CD4-positive, alpha-beta memory T cell (primary cell): ENCODE measurements at regions of chr1 and their contacts with region 1.

Region 1: GRCh38 chr1:151327223-151327902 is at the start of gene PI4KB:
- DNase-seq: peak; percentile 95 to 97 (median 97)
- H3K4me3 ChIP-seq: peak within 1 kb of the TSS; percentile 74 to 79
- H3K4me3 Mint-ChIP-seq: peak within 1 kb of the TSS; percentile 92 to 98 (median 97)
- H3K27ac ChIP-seq: peak within 1 kb of the TSS; percentile 84
- H3K27ac Mint-ChIP-seq: peak within 1 kb of the TSS; percentile 90 to 99 (median 99)
- H3K4me1 ChIP-seq: peaks cover 35% of the 10 kb centered on the region
- H3K4me1 Mint-ChIP-seq: peaks cover 31 to 57% (median 40%) of the 10 kb centered on the region in 4 donors
- H3K27me3 ChIP-seq: no peaks in the 10 kb centered on the region
- H3K27me3 Mint-ChIP-seq: no peaks in the 10 kb centered on the region
- total RNA-seq, gene PI4KB: 87.2 to 97.4 TPM

Region 2: DNA sequence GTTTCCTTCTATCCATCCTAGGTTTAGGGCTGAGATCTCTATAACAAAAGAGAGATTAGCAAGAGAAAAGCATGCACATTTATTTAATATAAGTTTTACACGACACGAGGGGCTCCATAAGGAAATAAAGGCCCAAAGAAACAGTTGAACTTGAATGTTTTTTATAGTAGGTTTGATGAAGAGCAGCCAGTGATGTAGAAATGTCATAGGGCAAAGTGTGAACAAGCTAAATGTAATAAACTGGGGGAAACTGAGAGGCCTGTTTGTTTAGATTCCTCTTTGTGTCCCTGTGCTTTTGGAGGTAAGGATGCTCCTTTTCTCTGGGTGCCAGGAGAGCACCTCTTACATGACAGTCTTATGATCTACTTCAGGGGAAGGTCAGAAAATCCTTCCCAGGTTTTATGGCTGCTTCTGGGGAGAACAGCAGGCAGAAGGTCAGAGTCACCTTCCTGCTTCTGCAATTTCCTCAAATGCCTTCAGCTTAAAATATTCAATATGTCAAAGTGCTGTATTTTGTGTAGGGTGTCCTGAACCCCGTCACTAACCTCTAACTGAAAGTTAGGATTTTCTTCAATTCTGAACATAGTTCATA is 597.1 kb before region 1 on chr1:
- CTCF ChIA-PET with region 1: no interaction called
- POLR2A ChIA-PET with region 1: no interaction called
- intact Hi-C with region 1: no loop called
- DNase-seq: no peak
- H3K4me3 ChIP-seq: no peak overlapping the region
- H3K4me3 Mint-ChIP-seq: no peak overlapping the region
- H3K27ac ChIP-seq: no peak overlapping the region
- H3K27ac Mint-ChIP-seq: peak overlapping the region in 2 of 7 donors; percentile 18 to 46
- H3K4me1 ChIP-seq: no peaks in the 10 kb centered on the region
- H3K4me1 Mint-ChIP-seq: no peaks in the 10 kb centered on the region
- H3K27me3 ChIP-seq: no peaks in the 10 kb centered on the region
- H3K27me3 Mint-ChIP-seq: no peaks in the 10 kb centered on the region

Region 3: DNA sequence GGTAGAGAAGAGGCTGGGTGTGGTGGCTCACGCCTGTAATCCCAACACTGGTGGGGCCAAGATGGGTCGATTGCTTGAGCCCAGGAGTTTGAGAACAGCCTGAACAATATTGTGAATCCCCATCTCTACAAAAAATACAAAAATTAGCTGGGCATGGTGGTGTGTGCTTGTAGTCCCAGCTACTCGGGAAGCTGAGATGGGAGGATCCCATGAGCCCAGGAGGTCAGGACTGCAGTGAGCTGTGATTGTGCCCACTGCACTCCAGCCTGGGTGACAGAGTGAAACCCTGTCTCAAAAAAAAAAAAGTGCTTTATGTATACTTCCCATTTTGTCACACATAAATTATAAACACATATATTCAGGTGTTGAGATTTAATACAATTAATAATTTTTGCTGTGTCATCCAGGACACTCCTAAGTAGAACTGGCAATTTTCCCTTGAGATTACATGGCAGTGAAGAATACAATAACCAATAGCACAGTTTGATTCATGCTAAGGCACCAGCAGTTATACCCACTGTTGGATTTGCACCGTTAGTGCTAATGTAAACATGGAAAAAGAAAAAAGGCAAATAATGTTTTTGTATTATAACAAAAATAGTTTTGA is 241.3 kb before region 1 on chr1:
- CTCF ChIA-PET with region 1: no interaction called
- POLR2A ChIA-PET with region 1: no interaction called
- intact Hi-C with region 1: no loop called
- DNase-seq: no peak
- H3K4me3 ChIP-seq: no peak overlapping the region
- H3K4me3 Mint-ChIP-seq: no peak overlapping the region
- H3K27ac ChIP-seq: no peak overlapping the region
- H3K27ac Mint-ChIP-seq: peak overlapping the region in 2 of 7 donors; percentile 16 to 65
- H3K4me1 ChIP-seq: no peaks in the 10 kb centered on the region
- H3K4me1 Mint-ChIP-seq: no peaks in the 10 kb centered on the region
- H3K27me3 ChIP-seq: no peaks in the 10 kb centered on the region
- H3K27me3 Mint-ChIP-seq: no peaks in the 10 kb centered on the region

Region 4: GRCh38 chr1:151189638-151190445 is 137.5 kb before region 1 on chr1 and contains the start of gene VPS72:
- CTCF ChIA-PET with region 1: no interaction called
- POLR2A ChIA-PET with region 1: interaction called, 10 read pairs
- intact Hi-C with region 1: no loop called
- DNase-seq: peak; percentile 81 to 92 (median 84)
- H3K4me3 ChIP-seq: peak within 1 kb of the TSS; percentile 67 to 78
- H3K4me3 Mint-ChIP-seq: peak within 1 kb of the TSS; percentile 92 to 100 (median 98)
- H3K27ac ChIP-seq: peak within 1 kb of the TSS; percentile 89
- H3K27ac Mint-ChIP-seq: peak within 1 kb of the TSS; percentile 91 to 100 (median 98)
- H3K4me1 ChIP-seq: peaks cover 25% of the 10 kb centered on the region
- H3K4me1 Mint-ChIP-seq: peaks cover 22 to 43% (median 33%) of the 10 kb centered on the region in 4 donors
- H3K27me3 ChIP-seq: no peaks in the 10 kb centered on the region
- H3K27me3 Mint-ChIP-seq: no peaks in the 10 kb centered on the region
- total RNA-seq, gene VPS72: 68.1 to 68.4 TPM

Region 5: DNA sequence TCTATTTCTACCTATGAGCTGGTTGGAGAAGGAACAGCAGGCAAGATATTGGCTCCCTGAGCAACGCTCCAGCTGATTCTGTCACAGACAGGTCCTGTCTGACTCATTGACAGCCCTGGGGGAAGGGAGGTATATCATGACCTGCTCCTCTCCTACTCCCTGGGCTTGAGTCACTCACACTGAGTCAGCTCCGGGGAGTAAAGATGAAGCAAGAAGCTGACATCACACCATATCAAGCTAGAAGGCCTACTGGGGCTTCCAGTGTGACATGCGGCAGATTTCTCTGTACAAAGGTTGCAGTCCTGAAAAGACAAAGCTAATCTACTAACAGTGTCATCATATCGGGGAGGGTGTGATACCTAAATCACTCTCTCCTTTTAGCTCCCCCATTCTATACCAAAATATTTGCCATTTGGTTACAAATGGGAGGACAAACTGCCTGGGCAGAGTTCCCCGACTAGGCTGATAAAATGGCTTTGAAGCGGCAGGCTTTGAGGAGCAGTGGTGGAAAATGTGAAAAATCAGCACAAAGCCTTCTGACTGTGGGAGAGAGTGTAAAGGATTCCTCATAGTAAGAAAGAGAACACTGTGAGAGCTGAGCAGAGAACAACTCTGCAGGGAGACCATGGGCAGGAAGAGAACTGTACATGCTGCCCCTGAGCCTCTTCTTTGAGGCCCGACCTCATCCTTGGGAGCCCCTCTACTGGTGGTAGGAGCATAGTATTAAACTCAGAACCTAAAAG is 15.6 kb before region 1 on chr1:
- CTCF ChIA-PET with region 1: interaction called, 3 read pairs
- POLR2A ChIA-PET with region 1: interaction called, 15 read pairs
- intact Hi-C with region 1: no loop called
- DNase-seq: peak in 3 of 5 donors; percentile 17 to 90 (median 22)
- H3K4me3 ChIP-seq: no peak overlapping the region
- H3K4me3 Mint-ChIP-seq: peak overlapping the region in 5 of 8 donors; percentile 5 to 37 (median 14)
- H3K27ac ChIP-seq: no peak overlapping the region
- H3K27ac Mint-ChIP-seq: peak overlapping the region; percentile 29 to 84 (median 78)
- H3K4me1 ChIP-seq: peaks cover 37% of the 10 kb centered on the region
- H3K4me1 Mint-ChIP-seq: peaks cover 25 to 53% (median 35%) of the 10 kb centered on the region in 4 donors
- H3K27me3 ChIP-seq: no peaks in the 10 kb centered on the region
- H3K27me3 Mint-ChIP-seq: no peaks in the 10 kb centered on the region

Region 6: GRCh38 chr1:151346769-151347522 is 19.6 kb after region 1 on chr1 and contains the start of gene RFX5:
- CTCF ChIA-PET with region 1: interaction called, 3 read pairs
- POLR2A ChIA-PET with region 1: interaction called, 23 read pairs
- intact Hi-C with region 1: loop called (anchors 1 kb)
- DNase-seq: peak; percentile 93 to 98 (median 97)
- H3K4me3 ChIP-seq: peak within 1 kb of the TSS; percentile 59 to 71
- H3K4me3 Mint-ChIP-seq: peak within 1 kb of the TSS; percentile 90 to 98 (median 94)
- H3K27ac ChIP-seq: peak within 1 kb of the TSS; percentile 97
- H3K27ac Mint-ChIP-seq: peak within 1 kb of the TSS; percentile 96 to 100 (median 98)
- H3K4me1 ChIP-seq: peaks cover 28% of the 10 kb centered on the region
- H3K4me1 Mint-ChIP-seq: peaks cover 22 to 41% (median 31%) of the 10 kb centered on the region in 4 donors
- H3K27me3 ChIP-seq: no peaks in the 10 kb centered on the region
- H3K27me3 Mint-ChIP-seq: no peaks in the 10 kb centered on the region
- total RNA-seq, gene RFX5: 56.3 to 64.3 TPM

Region 7: DNA sequence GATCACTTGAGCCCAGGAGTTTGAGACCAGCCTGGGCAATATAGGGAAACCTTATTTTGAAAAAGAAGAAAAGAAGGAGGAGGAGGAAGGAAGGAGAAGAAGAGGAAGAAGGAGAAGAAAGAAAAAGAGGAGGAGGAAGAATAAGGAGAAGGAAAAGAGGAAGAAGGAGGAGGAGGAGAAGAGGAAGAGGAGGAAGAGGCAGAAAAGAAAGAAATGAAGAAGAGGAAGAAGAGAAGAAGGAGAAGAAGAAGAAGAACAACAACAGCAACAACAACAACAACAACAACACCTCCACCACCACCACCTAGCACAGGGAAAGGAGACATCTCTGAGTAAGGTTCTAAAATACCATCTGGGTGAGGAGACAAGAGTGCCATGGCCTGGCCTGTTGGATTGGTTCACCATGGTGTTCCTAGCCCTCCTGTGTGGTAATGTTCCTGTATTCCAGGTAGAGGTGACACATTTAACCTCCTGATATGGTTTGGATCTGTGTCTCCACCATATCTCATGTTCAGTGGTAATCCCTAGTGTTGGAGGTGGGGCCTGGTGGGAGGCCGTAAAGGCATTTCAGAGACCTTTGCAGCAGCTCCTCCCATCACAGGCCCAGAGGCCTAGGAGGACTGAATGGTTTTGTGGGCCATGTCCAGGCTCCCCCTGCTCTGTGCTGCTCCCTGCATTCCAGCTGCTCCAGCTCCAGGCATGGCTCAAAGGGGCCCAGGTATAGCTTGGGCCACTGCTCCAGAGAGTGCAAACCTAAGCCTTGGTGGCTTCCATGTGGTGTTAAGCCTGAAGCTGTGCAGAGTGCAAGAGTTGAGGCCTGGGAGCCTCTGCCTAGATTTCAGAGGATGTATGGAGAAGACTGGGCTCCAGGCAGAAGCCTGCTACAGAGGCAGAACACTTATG is 34.8 kb after region 1 on chr1:
- CTCF ChIA-PET with region 1: no interaction called
- POLR2A ChIA-PET with region 1: no interaction called
- intact Hi-C with region 1: no loop called
- DNase-seq: no peak
- H3K4me3 ChIP-seq: no peak overlapping the region
- H3K4me3 Mint-ChIP-seq: no peak overlapping the region
- H3K27ac ChIP-seq: no peak overlapping the region
- H3K27ac Mint-ChIP-seq: no peak overlapping the region
- H3K4me1 ChIP-seq: no peaks in the 10 kb centered on the region
- H3K4me1 Mint-ChIP-seq: no peaks in the 10 kb centered on the region
- H3K27me3 ChIP-seq: no peaks in the 10 kb centered on the region
- H3K27me3 Mint-ChIP-seq: no peaks in the 10 kb centered on the region

Region 8: DNA sequence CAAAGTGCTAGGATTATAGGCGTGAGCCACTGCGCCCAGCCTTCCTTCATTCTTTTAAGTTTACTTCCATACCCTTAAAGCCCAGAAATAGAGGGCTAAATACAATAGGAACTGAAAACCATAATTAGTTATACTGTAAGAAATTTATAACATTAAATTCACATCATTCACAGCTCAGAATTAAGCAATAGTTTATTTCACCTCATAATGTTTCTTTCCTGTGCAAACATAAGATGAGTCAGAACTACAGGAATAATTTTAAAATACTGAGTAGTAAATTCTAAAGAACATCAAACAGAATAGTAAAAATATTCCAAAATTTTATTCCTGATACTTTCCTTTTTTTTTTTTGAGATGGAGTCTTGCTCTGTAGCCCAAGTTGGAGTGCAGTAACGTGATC is 107.8 kb after region 1 on chr1:
- CTCF ChIA-PET with region 1: no interaction called
- POLR2A ChIA-PET with region 1: no interaction called
- intact Hi-C with region 1: no loop called
- DNase-seq: no peak
- H3K4me3 ChIP-seq: no peak overlapping the region
- H3K4me3 Mint-ChIP-seq: no peak overlapping the region
- H3K27ac ChIP-seq: no peak overlapping the region
- H3K27ac Mint-ChIP-seq: peak overlapping the region in 2 of 7 donors; percentile 23 to 60
- H3K4me1 ChIP-seq: peaks cover 24% of the 10 kb centered on the region
- H3K4me1 Mint-ChIP-seq: peaks cover 20 to 43% (median 27%) of the 10 kb centered on the region in 4 donors
- H3K27me3 ChIP-seq: no peaks in the 10 kb centered on the region
- H3K27me3 Mint-ChIP-seq: no peaks in the 10 kb centered on the region

Region 9: DNA sequence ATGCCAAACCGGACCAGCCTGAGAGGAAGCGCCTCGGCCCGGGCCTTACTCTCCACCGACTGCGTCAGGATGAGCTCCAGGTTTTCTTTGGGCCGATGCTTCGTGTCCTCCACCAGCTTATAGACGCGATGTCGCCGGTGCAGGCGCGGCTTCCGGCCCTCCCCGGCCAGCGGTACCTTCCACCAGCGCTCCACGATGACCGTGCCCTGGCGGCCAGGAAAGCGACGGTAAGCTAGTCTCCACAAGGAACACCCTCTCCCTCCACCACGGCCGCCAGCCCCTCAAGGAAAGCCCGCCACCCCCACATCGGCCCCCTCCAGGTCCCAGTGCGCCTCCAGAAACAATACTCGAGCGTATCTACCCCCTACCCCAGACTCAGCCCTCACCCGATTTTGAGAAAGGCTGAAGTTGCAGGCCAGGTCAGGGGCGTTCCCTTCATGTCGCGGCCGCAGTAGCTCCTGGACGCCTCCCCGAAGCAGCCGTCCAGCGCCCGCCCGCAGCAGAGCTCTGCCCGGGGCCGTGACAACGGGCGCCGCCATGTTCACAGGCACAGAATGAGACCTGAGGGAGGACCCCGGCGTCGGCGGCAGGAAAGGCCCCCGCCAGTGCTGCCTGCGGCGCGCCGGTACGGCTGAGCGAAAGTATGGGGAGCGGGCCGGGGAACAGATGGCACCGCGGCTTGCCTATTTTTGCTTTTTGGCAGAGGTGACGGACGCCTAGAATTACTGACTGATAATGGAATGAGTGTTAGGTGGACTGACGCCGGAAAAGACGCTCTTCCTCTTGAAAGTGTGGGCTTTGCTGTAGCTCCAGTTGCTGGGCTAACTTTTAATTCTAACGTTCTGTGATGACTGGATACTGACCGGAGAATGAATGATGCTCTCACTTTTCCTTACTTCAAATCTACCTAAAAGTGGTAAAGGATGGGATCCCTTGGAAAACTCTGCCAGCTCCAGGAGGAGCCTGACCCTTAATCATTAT is 435.9 kb after region 1 on chr1 and contains the start of gene MRPL9:
- CTCF ChIA-PET with region 1: no interaction called
- POLR2A ChIA-PET with region 1: interaction called, 3 read pairs
- intact Hi-C with region 1: loop called (anchors 1 kb)
- DNase-seq: peak; percentile 82 to 85 (median 83)
- H3K4me3 ChIP-seq: peak within 1 kb of the TSS; percentile 34 to 66
- H3K4me3 Mint-ChIP-seq: peak within 1 kb of the TSS; percentile 86 to 97 (median 92)
- H3K27ac ChIP-seq: peak within 1 kb of the TSS; percentile 72
- H3K27ac Mint-ChIP-seq: peak within 1 kb of the TSS; percentile 90 to 99 (median 96)
- H3K4me1 ChIP-seq: peaks cover 16% of the 10 kb centered on the region
- H3K4me1 Mint-ChIP-seq: peaks cover 12 to 30% (median 21%) of the 10 kb centered on the region in 4 donors
- H3K27me3 ChIP-seq: no peaks in the 10 kb centered on the region
- H3K27me3 Mint-ChIP-seq: no peaks in the 10 kb centered on the region
- total RNA-seq, gene MRPL9: 75.5 to 82.8 TPM